ENCODE measurements at regions of chr16 and their contacts with region 1.

Region 1: GRCh38 chr16:67816240-67817031 is 9.7 kb downstream of the TSNAXIP1 start:
- DNase-seq: peak; percentile 87
- ATAC-seq: peak; percentile 93
- H3K4me3 Mint-ChIP-seq: no peak overlapping the region
- H3K27ac Mint-ChIP-seq: no peak overlapping the region
- H3K4me1 Mint-ChIP-seq: no peaks in the 10 kb centered on the region
- H3K27me3 Mint-ChIP-seq: no peaks in the 10 kb centered on the region
- CTCF ChIP-seq: peak; percentile 100

Region 2: DNA sequence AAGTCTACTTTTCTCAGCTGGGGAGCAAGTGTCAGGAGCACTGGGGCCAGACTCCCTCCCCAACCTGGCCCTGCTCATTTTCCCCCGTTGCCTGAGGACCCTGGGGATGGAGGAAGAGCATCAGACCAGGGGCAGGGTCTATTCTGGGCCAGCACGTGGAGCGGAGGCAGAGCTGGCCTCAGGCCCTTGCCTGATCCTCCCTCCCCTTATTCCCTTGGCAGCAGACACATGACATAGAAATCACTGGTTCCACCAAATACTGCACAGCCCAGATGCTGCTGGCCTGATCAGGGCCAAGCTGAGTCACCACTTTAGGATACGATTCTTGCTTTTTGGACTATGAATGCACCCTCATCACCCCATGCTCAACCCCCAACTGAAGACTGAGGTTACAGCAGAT is 317.3 kb before region 1 on chr16:
- CTCF ChIA-PET with region 1: no interaction called
- POLR2A ChIA-PET with region 1: no interaction called
- DNase-seq: no peak
- ATAC-seq: no peak
- H3K4me3 Mint-ChIP-seq: no peak overlapping the region
- H3K27ac Mint-ChIP-seq: no peak overlapping the region
- H3K4me1 Mint-ChIP-seq: no peaks in the 10 kb centered on the region
- H3K27me3 Mint-ChIP-seq: peaks cover 86% of the 10 kb centered on the region
- CTCF ChIP-seq: no peak

Region 3: GRCh38 chr16:67667817-67668494 is 148.5 kb before region 1 on chr16:
- CTCF ChIA-PET with region 1: interaction called, 42 read pairs
- POLR2A ChIA-PET with region 1: no interaction called
- DNase-seq: peak; percentile 82
- ATAC-seq: peak; percentile 66
- H3K4me3 Mint-ChIP-seq: peak overlapping the region; percentile 84; the same call in 1 of the 2 replicates
- H3K27ac Mint-ChIP-seq: no peak overlapping the region
- H3K4me1 Mint-ChIP-seq: peaks cover 11% of the 10 kb centered on the region
- H3K27me3 Mint-ChIP-seq: peaks cover 6% of the 10 kb centered on the region
- CTCF ChIP-seq: no peak

Region 4: DNA sequence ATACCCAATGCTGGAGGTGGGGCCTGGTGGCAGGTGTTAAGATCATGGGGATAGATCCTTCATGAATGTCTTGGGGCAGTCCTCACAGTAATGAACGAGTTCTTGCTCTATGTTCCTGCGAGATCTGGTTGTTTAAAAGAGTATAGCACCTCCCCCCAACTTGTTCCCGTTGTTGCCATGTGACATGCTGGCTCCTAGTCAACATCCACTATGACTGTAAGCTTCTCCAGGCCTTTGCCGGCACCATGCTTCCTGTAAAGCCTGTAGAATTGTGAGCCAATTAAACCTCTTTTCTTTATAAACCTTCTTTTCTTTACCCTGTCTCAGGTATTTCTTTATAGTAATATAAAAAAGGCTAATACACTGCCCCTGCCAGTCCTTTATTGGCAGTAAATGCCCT is 43.3 kb before region 1 on chr16:
- CTCF ChIA-PET with region 1: interaction called, 14 read pairs
- POLR2A ChIA-PET with region 1: no interaction called
- DNase-seq: no peak
- ATAC-seq: no peak
- H3K4me3 Mint-ChIP-seq: no peak overlapping the region
- H3K27ac Mint-ChIP-seq: peak overlapping the region; percentile 65; the same call in 1 of the 2 replicates
- H3K4me1 Mint-ChIP-seq: no peaks in the 10 kb centered on the region
- H3K27me3 Mint-ChIP-seq: no peaks in the 10 kb centered on the region
- CTCF ChIP-seq: no peak

Region 5: DNA sequence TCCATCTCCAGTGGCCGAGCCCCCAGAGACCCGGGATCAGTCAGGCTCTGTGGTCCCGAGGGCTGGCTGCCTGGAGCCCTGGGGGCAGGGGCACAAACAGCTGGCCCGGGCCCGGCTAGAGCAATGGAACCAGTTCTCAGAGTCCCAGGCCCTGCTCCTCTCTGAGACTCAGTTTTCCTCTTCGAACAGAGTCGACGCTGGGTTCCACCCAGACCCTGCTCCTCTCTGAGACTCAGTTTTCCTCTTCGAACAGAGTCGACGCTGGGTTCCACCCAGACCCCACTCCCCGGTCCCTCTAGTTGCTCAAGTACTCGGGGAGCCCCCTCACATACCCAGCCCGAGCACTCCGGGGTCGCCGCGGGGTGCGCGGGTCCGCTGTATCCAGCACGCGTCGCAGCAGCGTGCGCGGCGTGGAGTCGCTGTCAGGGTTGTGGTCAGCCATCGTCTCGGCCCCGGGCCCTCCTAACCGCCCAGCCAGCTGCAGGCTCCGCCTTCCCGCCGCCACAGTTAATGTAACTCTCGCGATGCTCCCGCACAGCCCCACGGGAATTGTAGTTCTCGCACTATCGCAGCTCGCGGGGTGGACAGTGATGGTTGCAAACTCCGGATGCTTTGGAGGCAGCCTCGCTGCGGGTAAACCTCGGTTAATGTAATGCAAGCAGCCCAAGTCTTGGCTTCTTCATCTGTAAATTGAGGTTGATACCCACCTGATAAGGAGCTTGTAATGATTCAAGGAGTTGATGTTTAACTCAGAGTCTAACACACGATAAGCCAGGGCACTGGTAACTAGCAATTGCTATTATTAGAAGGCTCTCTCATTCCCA is 17.2 kb after region 1 on chr16:
- CTCF ChIA-PET with region 1: interaction called, 62 read pairs
- POLR2A ChIA-PET with region 1: interaction called, 5 read pairs
- DNase-seq: peak; percentile 96
- ATAC-seq: peak; percentile 99
- H3K4me3 Mint-ChIP-seq: peak overlapping the region; percentile 80
- H3K27ac Mint-ChIP-seq: no peak overlapping the region
- H3K4me1 Mint-ChIP-seq: peaks cover 9% of the 10 kb centered on the region
- H3K27me3 Mint-ChIP-seq: no peaks in the 10 kb centered on the region; the same call in 1 of the 2 replicates
- CTCF ChIP-seq: no peak

Region 6: DNA sequence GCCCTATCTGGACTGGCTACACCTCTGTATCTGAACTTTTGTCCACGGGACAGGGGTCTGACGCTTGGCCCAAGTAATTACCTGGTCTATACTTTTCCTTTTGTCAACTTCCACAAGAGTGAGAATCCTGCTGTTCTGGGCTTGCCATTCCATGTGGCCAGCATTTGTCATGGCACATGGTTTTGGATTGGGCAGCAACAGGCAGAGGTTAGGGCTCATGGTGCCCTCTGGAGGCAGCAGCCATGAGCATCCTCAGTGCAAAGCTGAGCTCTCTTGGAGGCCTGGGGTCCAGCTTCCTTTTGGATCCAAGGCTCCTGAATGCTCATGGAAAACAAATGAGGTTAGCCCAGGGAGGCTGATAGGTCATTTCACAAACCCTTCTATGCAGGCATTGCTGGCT is 48.9 kb after region 1 on chr16:
- CTCF ChIA-PET with region 1: interaction called, 56 read pairs
- POLR2A ChIA-PET with region 1: no interaction called
- DNase-seq: peak; percentile 58
- ATAC-seq: peak; percentile 88
- H3K4me3 Mint-ChIP-seq: no peak overlapping the region
- H3K27ac Mint-ChIP-seq: 0 out of 2 replicates have a peak overlapping the region, but pooled peaks have one; percentile 26
- H3K4me1 Mint-ChIP-seq: peaks cover 4% of the 10 kb centered on the region; the same call in 1 of the 2 replicates
- H3K27me3 Mint-ChIP-seq: no peaks in the 10 kb centered on the region
- CTCF ChIP-seq: no peak

Region 7: GRCh38 chr16:67928561-67929364 is 112.3 kb after region 1 on chr16:
- CTCF ChIA-PET with region 1: interaction called, 22 read pairs
- POLR2A ChIA-PET with region 1: no interaction called
- DNase-seq: peak; percentile 88
- ATAC-seq: peak; percentile 81
- H3K4me3 Mint-ChIP-seq: no peak overlapping the region
- H3K27ac Mint-ChIP-seq: no peak overlapping the region
- H3K4me1 Mint-ChIP-seq: peaks cover 15% of the 10 kb centered on the region
- H3K27me3 Mint-ChIP-seq: no peaks in the 10 kb centered on the region
- CTCF ChIP-seq: peak; percentile 67

Measured in WTC11 (cell line).